ENCODE measurements at regions of chr17 and their contacts with region 1.

Region 1: GRCh38 chr17:9307292-9308042 is 268.2 kb downstream of the STX8 start:
- DNase-seq: no peak
- H3K4me3 ChIP-seq: no peak overlapping the region
- CTCF ChIP-seq: no peak
- POLR2A ChIP-seq: no peak

Region 2: DNA sequence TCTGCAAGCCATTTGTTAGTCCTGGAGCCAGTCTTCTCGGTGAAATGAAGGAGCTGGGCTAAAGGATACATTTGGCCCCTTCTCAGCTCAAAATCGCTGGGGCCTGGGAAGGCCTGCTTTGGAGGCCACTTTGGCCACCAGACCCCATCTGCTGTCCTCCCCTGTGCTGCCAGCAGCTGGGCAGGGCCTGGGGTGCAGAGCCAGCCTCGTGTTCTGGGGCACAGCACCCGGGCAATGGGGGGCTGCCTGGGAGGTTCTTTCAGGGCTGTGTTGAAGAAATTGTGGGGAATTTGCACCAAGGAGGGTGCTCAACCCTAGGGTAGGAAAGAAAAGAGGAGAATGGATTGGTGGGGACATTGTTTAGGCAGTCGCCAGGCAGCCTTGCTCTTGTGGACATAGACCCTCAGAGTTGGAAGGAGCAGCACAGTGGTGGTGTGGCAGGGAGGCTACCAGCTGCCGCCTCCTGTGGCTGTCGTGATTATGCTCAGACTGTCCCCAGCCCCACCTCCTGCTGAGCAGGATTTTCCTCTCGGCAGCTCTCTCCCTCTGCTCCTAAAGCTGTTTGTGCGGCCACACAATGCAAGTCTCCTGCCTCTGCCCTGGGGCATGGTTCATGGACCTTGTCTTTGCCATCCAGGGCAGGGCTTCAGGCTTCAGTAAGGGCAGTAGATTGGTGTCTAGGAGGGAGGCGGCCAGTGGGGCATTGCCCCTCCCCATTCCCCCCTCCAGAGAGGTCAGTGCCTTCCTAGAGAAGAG is 111.3 kb before region 1 on chr17:
- intact Hi-C with region 1: no loop called
- DNase-seq: no peak
- H3K4me3 ChIP-seq: no peak overlapping the region
- CTCF ChIP-seq: no peak
- POLR2A ChIP-seq: no peak

Region 3: DNA sequence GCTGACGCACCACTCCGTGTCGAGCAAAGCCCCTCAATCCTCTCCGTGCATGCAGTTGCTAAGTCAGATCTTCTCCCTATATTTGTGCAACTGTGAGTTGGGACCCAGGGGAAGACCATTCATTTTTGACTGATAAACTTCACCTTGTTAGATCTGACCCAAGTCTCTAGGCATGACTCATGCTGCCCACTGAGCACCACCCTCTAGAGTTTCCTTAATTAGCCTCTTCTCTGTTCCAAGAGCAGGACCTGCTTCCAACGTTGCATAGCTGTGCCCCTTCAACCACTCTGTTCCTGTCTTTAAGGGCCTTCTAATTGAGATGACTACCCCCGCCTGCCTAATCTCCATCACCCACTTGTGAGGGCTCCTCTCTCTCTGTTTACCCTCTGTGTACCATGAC is 1062.7 kb after region 1 on chr17:
- intact Hi-C with region 1: loop called (anchors 10 kb)
- DNase-seq: no peak
- H3K4me3 ChIP-seq: no peak overlapping the region
- CTCF ChIP-seq: no peak
- POLR2A ChIP-seq: no peak

Measured in lower leg skin (tissue), 4 donors.